Sigmoid colon (tissue), 7 donors: ENCODE measurements at regions of chrX and their contacts with region 1.

Region 1: DNA sequence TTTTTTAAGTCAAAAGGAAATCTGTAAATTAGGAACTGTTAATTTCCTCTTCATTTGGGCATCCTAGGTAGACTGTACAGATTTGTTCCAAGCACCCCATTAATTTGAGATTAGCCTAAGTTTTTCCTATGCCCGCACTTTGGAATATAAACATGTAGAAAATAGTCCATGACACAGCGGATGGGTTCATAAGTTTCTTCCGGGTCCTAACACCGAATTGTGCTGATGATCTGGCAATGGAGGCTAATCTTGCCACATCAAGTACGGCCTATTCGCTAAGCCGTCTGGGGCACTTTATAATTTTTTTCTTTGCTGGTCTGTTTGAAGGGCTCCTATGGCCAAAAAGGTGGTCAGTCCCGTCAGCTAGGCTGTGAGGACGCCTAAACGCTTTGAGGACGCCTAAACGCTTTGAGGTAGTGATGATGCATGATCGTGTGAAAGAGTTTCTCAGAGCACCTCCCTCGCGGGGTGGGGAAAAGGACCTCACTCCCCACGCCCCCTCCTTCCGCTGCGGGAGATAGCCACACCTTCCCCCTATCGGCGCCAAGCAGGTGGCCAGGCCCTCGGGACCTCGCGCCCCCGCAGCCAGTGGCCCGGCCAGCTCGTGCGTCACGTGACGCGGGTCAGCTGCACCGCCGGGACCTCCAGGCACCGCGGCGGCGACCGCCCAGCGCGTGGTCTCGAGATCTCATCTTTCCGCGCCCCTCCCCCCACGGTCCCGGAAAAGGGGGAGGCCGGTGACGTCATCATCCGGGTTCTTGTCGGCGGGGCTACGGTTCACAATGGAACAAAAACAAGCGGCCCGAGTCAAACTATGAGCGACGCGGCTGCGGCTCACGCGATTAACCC is 977 bp upstream of the USP9X start:
- DNase-seq: peak; percentile 100
- H3K4me3 ChIP-seq: peak overlapping the region; percentile 68 to 94 (median 78)
- H3K27ac ChIP-seq: peak overlapping the region; percentile 96 to 99 (median 97)
- H3K4me1 ChIP-seq: peaks cover 0 to 25% (median 7%) of the 10 kb centered on the region in 4 donors
- H3K27me3 ChIP-seq: no peaks in the 10 kb centered on the region
- CTCF ChIP-seq: no peak
- EP300 ChIP-seq: peak; percentile 30 to 85 (median 44)
- POLR2A ChIP-seq: peak; percentile 46 to 75

Region 2: DNA sequence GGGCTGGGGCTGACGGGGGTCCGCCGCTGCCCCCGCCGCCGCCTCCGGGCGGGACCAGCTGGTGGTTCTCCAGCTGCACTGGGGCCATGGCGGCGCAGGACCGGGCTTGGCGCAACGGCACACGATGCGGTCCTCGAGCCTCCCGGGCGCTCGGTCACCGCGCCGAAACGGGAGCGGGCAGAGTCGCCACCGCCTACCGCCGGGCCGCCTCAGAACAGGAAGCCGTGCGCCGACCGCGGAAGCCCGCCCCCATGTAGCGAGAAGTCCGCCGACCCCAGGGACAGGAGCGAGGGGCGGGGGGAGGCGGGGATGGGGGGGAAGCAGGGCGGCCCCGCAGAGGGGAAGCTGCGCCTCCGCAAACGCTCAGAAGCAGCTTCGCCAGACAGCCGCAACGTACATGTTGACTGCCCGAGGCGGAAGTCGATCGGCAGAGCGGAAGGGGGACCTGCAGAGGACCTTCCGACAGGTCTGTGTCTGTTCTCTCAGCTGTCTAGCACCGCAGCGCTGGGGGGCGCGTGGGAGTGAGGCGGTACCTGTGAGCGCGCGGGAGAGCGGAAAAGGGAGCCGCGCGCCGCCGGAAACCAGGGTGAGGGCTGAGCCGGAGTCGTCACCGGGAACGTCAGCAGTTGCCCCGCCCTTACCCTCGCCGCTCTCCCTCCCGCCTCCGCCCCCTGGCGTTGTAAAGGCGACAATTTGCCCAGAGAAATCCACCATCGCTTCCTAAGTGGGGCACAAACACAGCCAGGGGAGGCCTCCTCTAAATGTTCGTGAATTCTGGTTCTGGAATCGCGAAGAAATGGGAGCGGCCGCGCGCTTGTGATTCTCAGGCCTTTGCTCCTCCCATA is 348.7 kb before region 1 on chrX and contains the start of gene MED14:
- intact Hi-C with region 1: loop called (anchors 10 kb)
- DNase-seq: peak; percentile 92
- H3K4me3 ChIP-seq: peak within 1 kb of the TSS; percentile 70 to 87 (median 78)
- H3K27ac ChIP-seq: peak within 1 kb of the TSS; percentile 92 to 98 (median 94)
- H3K4me1 ChIP-seq: peaks cover 0 to 22% (median 18%) of the 10 kb centered on the region in 4 donors
- H3K27me3 ChIP-seq: no peaks in the 10 kb centered on the region
- CTCF ChIP-seq: peak; percentile 7 to 31 (median 28)
- EP300 ChIP-seq: no peak
- POLR2A ChIP-seq: peak in 1 of 2 donors; percentile 60
- total RNA-seq, gene MED14: 23.9 to 51.6 (median 28.3) TPM

Region 3: GRCh38 chrX:40933132-40933705 is 151.0 kb before region 1 on chrX:
- intact Hi-C with region 1: loop called (anchors 2 kb)
- DNase-seq: no peak
- H3K4me3 ChIP-seq: peak overlapping the region in 3 of 4 donors; percentile 12 to 28 (median 20)
- H3K27ac ChIP-seq: peak overlapping the region; percentile 44 to 76 (median 65)
- H3K4me1 ChIP-seq: peaks cover 0 to 8% (median 0%) of the 10 kb centered on the region in 4 donors
- H3K27me3 ChIP-seq: no peaks in the 10 kb centered on the region
- CTCF ChIP-seq: no peak
- EP300 ChIP-seq: no peak
- POLR2A ChIP-seq: no peak

Region 4: DNA sequence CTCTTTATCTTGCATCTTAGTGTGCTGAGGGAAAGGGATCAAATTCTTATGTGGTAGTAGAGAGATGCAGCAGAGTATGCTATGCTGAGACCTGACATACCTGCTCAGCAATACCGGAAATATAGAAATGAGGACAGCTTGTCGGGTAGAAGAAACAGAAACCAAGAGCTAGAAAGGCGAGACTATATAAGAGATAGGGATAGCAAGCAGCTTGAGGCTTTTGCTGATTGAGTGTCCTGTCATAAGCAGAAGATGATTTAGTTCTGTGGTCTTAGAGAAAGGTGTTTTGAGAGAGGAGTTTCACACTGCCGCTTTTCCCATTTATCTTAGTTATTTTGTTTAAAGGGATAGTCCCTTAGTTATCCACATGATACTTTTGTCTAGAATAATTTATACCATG is 32.7 kb after region 1 on chrX:
- intact Hi-C with region 1: loop called (anchors 2 kb)
- DNase-seq: no peak
- H3K4me3 ChIP-seq: no peak overlapping the region
- H3K27ac ChIP-seq: no peak overlapping the region
- H3K4me1 ChIP-seq: peaks cover 0 to 41% (median 12%) of the 10 kb centered on the region in 4 donors
- H3K27me3 ChIP-seq: no peaks in the 10 kb centered on the region
- CTCF ChIP-seq: no peak
- EP300 ChIP-seq: no peak
- POLR2A ChIP-seq: no peak

Region 5: GRCh38 chrX:41333744-41334259 is 249.5 kb after region 1 on chrX and contains the start of gene DDX3X:
- intact Hi-C with region 1: loop called (anchors 2 kb)
- DNase-seq: peak; percentile 97
- H3K4me3 ChIP-seq: peak within 1 kb of the TSS; percentile 80 to 99 (median 94)
- H3K27ac ChIP-seq: peak within 1 kb of the TSS; percentile 98 to 100 (median 100)
- H3K4me1 ChIP-seq: peaks cover 0 to 46% (median 17%) of the 10 kb centered on the region in 4 donors
- H3K27me3 ChIP-seq: no peaks in the 10 kb centered on the region
- CTCF ChIP-seq: peak in 1 of 4 experiments; percentile 38
- EP300 ChIP-seq: peak in 1 of 4 donors; percentile 7
- POLR2A ChIP-seq: peak; percentile 95 to 98
- total RNA-seq, gene DDX3X: 146 to 218 (median 214) TPM